ENCODE measurements at regions of chr2 and their contacts with region 1.

Region 1: GRCh38 chr2:172931918-172932520 is 143.6 kb upstream of the MAP3K20 start:
- DNase-seq: peak; percentile 10 to 68
- ATAC-seq: peak; percentile 69 to 85; a peak in 3 of 6 replicates
- H3K4me3 ChIP-seq: no peak overlapping the region
- H3K27ac ChIP-seq: no peak overlapping the region
- H3K4me1 ChIP-seq: peaks cover 9% of the 10 kb centered on the region; the same call in 2 of the 3 replicates
- CTCF ChIP-seq: peak; percentile 83
- EP300 ChIP-seq: no peak
- POLR2A ChIP-seq: no peak
- RAD21 ChIP-seq: peak; percentile 81 to 88

Region 2: GRCh38 chr2:172821370-172822347 is 110.4 kb before region 1 on chr2:
- CTCF ChIA-PET with region 1: interaction called, 25 read pairs
- POLR2A ChIA-PET with region 1: no interaction called
- DNase-seq: no peak
- ATAC-seq: no peak
- H3K4me3 ChIP-seq: no peak overlapping the region
- H3K27ac ChIP-seq: no peak overlapping the region
- H3K4me1 ChIP-seq: no peaks in the 10 kb centered on the region
- CTCF ChIP-seq: no peak
- EP300 ChIP-seq: no peak
- POLR2A ChIP-seq: no peak
- RAD21 ChIP-seq: no peak

Region 3: DNA sequence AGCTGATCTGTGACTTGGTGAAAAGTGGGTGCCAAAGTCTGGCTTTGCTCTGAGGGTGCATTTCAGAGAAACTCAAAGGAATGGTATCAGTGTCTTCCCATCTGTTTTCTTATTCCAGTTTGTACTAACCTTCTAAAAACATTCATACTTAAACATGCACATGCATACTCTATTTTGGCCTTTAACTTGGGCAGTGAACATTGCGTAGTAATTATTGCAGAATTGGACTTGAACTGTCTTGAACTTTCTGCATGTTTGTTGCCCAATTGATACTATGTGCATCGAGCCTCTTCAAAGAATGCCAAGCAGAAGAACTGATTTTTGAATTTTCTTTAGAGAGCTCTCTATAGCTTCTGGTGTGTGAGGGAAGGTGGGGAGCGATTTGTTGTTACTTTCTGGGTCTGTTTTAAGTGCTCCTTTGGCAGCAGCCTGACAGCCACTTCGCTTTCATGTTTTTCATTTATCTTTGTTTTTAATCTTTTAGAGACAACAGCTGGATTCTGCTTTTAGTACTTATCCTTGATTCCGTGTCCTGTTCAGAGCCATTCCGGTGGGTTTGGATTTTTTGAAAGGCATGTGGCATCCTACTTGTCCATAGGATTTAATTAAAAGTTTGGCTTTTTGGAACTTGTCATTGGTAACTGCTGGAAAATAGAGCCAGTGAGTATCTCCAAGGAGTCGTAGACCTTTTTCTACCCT is 37.2 kb before region 1 on chr2:
- CTCF ChIA-PET with region 1: interaction called, 13 read pairs
- POLR2A ChIA-PET with region 1: no interaction called
- DNase-seq: no peak
- ATAC-seq: no peak
- H3K4me3 ChIP-seq: no peak overlapping the region
- H3K27ac ChIP-seq: no peak overlapping the region
- H3K4me1 ChIP-seq: no peaks in the 10 kb centered on the region
- CTCF ChIP-seq: no peak
- EP300 ChIP-seq: no peak
- POLR2A ChIP-seq: no peak
- RAD21 ChIP-seq: no peak

Region 4: GRCh38 chr2:172921532-172922236 is 10.3 kb before region 1 on chr2:
- CTCF ChIA-PET with region 1: interaction called, 46 read pairs
- POLR2A ChIA-PET with region 1: no interaction called
- DNase-seq: peak in 1 of 2 experiments; percentile 12
- ATAC-seq: peak; percentile 43 to 81; a peak in 4 of 6 replicates
- H3K4me3 ChIP-seq: no peak overlapping the region
- H3K27ac ChIP-seq: no peak overlapping the region
- H3K4me1 ChIP-seq: peaks cover 12% of the 10 kb centered on the region
- CTCF ChIP-seq: no peak
- EP300 ChIP-seq: no peak
- POLR2A ChIP-seq: no peak
- RAD21 ChIP-seq: no peak

Region 5: DNA sequence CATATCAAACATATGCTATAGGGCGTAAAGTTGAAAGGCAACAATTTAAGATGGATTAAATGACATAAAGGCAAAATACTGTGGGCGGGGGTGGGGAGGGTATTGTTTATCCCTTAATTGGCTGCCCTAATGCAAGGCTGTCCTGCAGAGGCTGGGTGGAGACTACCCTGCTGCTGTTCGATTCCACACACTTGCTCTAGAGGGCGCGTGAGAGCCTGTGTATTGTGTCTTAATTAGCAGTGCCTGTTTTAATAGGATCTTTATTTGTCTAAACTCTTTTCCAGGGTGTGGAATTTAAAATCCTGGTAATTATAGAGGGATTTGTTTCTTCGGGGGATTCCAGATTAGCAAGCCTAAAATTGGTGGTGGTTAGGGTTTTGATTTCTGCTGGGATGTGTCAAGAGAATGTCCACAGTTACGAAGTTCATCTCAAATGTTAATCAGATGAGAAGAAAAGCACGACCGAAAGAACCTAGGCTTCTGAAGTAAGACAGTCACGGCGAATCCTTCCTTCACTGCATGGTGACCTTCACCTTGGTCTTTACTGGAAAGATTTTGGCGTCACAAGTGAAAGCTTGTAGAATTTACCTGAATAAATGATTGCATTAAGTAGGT is 40.1 kb after region 1 on chr2:
- CTCF ChIA-PET with region 1: interaction called, 28 read pairs
- POLR2A ChIA-PET with region 1: no interaction called
- DNase-seq: peak; percentile 52 to 53
- ATAC-seq: peak; percentile 70 to 86; a peak in 4 of 6 replicates
- H3K4me3 ChIP-seq: no peak overlapping the region
- H3K27ac ChIP-seq: no peak overlapping the region
- H3K4me1 ChIP-seq: peaks cover 21% of the 10 kb centered on the region
- CTCF ChIP-seq: peak; percentile 77
- EP300 ChIP-seq: no peak
- POLR2A ChIP-seq: no peak
- RAD21 ChIP-seq: peak; percentile 61 to 68

Region 6: GRCh38 chr2:173386021-173386737 is 454.2 kb after region 1 on chr2:
- CTCF ChIA-PET with region 1: no interaction called
- POLR2A ChIA-PET with region 1: no interaction called
- DNase-seq: no peak
- ATAC-seq: no peak
- H3K4me3 ChIP-seq: no peak overlapping the region
- H3K27ac ChIP-seq: no peak overlapping the region
- H3K4me1 ChIP-seq: no peaks in the 10 kb centered on the region
- CTCF ChIP-seq: no peak
- EP300 ChIP-seq: no peak
- POLR2A ChIP-seq: no peak
- RAD21 ChIP-seq: no peak